Activated CD4-positive, alpha-beta memory T cell treated with anti-CD3 and anti-CD28 coated beads, Interleukin-2, amount 10 ng/mL, durations not matched to agents 7 days and 5 days (primary cell): ENCODE measurements at regions of chr7 and their contacts with region 1.

Region 1: GRCh38 chr7:65373608-65374351 is at the start of gene ZNF92:
- DNase-seq: peak; percentile 98
- H3K4me3 Mint-ChIP-seq: peak within 1 kb of the TSS; percentile 87
- H3K27ac Mint-ChIP-seq: peak within 1 kb of the TSS; percentile 92
- H3K4me1 Mint-ChIP-seq: peaks cover 41% of the 10 kb centered on the region
- H3K27me3 Mint-ChIP-seq: no peaks in the 10 kb centered on the region
- total RNA-seq, gene ZNF92: 19.7 to 21.6 TPM

Region 2: GRCh38 chr7:65453341-65454030 is 79.7 kb after region 1 on chr7:
- CTCF ChIA-PET with region 1: no interaction called
- POLR2A ChIA-PET with region 1: no interaction called
- DNase-seq: no peak
- H3K4me3 Mint-ChIP-seq: no peak overlapping the region
- H3K27ac Mint-ChIP-seq: no peak overlapping the region
- H3K4me1 Mint-ChIP-seq: peaks cover 7% of the 10 kb centered on the region
- H3K27me3 Mint-ChIP-seq: peaks cover 4% of the 10 kb centered on the region

Region 3: GRCh38 chr7:65475734-65476319 is 102.0 kb after region 1 on chr7:
- CTCF ChIA-PET with region 1: no interaction called
- POLR2A ChIA-PET with region 1: interaction called, 19 read pairs
- DNase-seq: peak; percentile 68
- H3K4me3 Mint-ChIP-seq: peak overlapping the region; percentile 12
- H3K27ac Mint-ChIP-seq: peak overlapping the region; percentile 86
- H3K4me1 Mint-ChIP-seq: peaks cover 52% of the 10 kb centered on the region
- H3K27me3 Mint-ChIP-seq: no peaks in the 10 kb centered on the region